MCF 10A (cell line): ENCODE measurements at regions of chr14 and their contacts with region 1.

Region 1: DNA sequence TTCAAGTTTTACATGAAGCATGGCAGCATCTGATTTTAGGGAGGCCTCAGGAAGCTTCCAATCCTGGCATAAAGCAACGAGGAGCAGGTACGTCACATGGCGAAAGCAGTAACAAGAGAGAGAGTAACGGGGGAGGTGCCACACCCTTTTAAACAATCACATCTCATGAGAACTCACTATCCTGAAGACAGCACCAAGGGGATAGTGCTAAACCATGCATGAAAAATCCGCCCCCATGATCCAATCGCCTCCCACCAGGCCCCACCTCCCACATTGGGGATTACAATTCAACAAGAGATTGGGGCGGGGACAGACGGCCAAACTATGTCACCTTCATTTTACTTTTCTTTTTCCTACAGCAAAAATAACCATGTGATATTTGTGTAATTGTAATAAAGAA is 7.2 kb upstream of the MAP3K9 start:
- DNase-seq: no peak
- H3K4me3 Mint-ChIP-seq: no peak overlapping the region
- H3K27ac Mint-ChIP-seq: no peak overlapping the region
- H3K4me1 Mint-ChIP-seq: no peaks in the 10 kb centered on the region
- H3K27me3 Mint-ChIP-seq: no peaks in the 10 kb centered on the region
- CTCF ChIP-seq: no peak

Region 2: DNA sequence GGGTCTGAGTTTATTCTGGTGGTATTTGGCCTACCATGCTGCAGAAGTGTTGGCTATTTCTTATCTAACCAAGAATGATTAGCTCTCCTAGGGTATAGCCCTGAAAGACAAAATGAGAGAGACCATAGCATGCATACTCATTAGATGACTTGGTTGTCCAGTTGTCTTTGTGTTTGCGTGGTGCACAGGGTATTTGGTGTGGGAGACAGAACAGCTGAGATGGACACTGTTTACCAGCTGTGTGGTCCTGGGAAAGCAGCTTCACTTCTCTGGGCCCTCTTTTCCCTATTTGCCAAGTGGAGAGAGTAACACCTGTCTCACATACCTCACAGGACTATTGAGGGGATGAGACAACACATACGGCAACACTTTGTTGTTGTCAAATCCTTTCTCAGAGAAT is 723.4 kb before region 1 on chr14:
- CTCF ChIA-PET with region 1: no interaction called
- POLR2A ChIA-PET with region 1: no interaction called
- intact Hi-C with region 1: loop called (anchors 2 kb)
- DNase-seq: no peak
- H3K4me3 Mint-ChIP-seq: no peak overlapping the region
- H3K27ac Mint-ChIP-seq: no peak overlapping the region
- H3K4me1 Mint-ChIP-seq: peaks cover 3% of the 10 kb centered on the region
- H3K27me3 Mint-ChIP-seq: peaks cover 20% of the 10 kb centered on the region
- CTCF ChIP-seq: no peak

Region 3: DNA sequence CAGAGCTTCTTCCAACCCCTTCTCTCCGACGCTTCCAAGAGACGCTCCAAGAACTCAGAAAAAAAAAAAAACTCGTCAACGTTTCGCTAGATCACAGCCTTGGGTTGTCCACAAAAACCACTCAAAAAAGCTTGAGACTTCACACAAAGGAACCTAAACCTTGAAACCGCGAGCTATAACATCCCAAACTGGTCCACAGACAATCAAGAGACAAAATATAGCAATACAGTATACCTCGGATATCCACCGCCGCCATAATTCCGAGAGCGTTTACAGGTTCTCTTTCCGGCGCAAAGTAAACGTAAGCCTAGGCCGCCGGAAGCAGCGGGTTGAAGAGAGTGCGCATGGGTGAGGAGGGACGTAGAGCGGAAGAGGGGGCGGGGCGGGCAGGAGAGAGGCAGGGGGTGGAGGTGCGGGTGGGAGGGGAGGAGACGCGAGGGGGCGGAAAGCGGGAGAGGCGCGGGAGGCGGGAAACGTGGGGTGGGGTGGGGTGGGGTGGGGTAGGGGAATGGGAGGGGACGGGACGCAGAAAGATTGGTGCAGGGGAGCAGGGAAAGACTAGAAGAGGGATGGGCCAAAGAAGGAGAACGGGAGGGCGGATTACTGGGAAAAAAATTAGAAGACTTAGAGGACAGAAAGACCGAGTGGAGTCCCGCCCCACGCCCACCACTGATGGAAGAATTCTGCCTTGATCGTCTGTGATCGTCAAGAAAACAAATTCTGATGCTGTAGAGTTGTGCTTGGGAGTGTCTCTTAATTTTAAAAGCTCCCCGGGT is 216.0 kb before region 1 on chr14 and contains the start of gene MED6:
- CTCF ChIA-PET with region 1: interaction called, 23 read pairs
- POLR2A ChIA-PET with region 1: no interaction called
- intact Hi-C with region 1: no loop called
- DNase-seq: peak; percentile 95
- H3K4me3 Mint-ChIP-seq: peak within 1 kb of the TSS; percentile 98
- H3K27ac Mint-ChIP-seq: peak within 1 kb of the TSS; percentile 98
- H3K4me1 Mint-ChIP-seq: peaks cover 13% of the 10 kb centered on the region
- H3K27me3 Mint-ChIP-seq: peaks cover 11% of the 10 kb centered on the region
- CTCF ChIP-seq: no peak
- total RNA-seq, gene MED6: 41.6 and 60.8 TPM in 2 replicates

Region 4: GRCh38 chr14:70714055-70714621 is 102.4 kb before region 1 on chr14:
- CTCF ChIA-PET with region 1: interaction called, 19 read pairs
- POLR2A ChIA-PET with region 1: no interaction called
- intact Hi-C with region 1: loop called (anchors 2 kb)
- DNase-seq: peak; percentile 72
- H3K4me3 Mint-ChIP-seq: no peak overlapping the region
- H3K27ac Mint-ChIP-seq: no peak overlapping the region
- H3K4me1 Mint-ChIP-seq: peaks cover 17% of the 10 kb centered on the region
- H3K27me3 Mint-ChIP-seq: no peaks in the 10 kb centered on the region
- CTCF ChIP-seq: peak; percentile 72

Region 5: DNA sequence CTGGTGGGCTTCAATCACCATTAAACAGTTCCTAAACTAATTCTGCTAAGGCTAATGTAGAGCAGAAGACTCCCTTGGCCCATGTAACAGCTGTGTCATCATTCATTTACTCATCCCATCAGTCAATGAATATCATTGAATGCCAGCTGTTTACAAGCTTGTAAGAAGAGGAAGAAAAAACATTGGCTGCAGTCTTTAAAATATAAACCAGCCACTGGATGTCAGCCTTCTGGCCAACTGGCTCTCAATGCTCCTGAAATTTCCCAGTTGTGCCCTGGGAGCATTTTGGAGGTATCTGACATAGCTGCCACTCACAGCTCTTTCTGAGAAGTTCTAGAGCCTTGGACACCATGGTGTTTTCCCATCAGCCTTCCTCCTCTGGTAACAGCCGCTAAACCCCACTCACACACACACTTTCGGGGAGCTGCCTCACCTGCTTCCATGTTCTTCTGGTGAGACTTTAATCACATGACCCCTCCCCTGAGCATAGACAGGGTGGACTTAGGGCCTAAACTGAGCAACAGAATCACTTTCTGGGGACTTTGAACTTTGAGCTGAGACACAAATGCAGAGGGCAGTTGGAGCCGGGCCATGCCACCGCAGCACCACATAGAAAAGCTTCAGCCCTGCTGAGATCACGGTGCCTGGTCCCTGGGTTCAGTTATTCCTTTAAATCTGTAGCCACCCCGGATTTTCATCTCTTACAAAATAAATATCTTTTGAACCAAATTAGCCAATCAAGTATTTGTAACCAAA is 11.0 kb after region 1 on chr14:
- CTCF ChIA-PET with region 1: interaction called, 31 read pairs
- POLR2A ChIA-PET with region 1: interaction called, 7 read pairs
- intact Hi-C with region 1: no loop called
- DNase-seq: no peak
- H3K4me3 Mint-ChIP-seq: no peak overlapping the region
- H3K27ac Mint-ChIP-seq: no peak overlapping the region
- H3K4me1 Mint-ChIP-seq: no peaks in the 10 kb centered on the region
- H3K27me3 Mint-ChIP-seq: no peaks in the 10 kb centered on the region
- CTCF ChIP-seq: no peak

Region 6: GRCh38 chr14:70972107-70972976 is 155.8 kb after region 1 on chr14:
- CTCF ChIA-PET with region 1: interaction called, 40 read pairs
- POLR2A ChIA-PET with region 1: interaction called, 4 read pairs
- intact Hi-C with region 1: loop called (anchors 1 kb)
- DNase-seq: peak; percentile 88
- H3K4me3 Mint-ChIP-seq: no peak overlapping the region
- H3K27ac Mint-ChIP-seq: peak overlapping the region; percentile 53
- H3K4me1 Mint-ChIP-seq: peaks cover 8% of the 10 kb centered on the region
- H3K27me3 Mint-ChIP-seq: no peaks in the 10 kb centered on the region
- CTCF ChIP-seq: peak; percentile 81

Region 7: GRCh38 chr14:71638523-71639196 is 822.1 kb after region 1 on chr14:
- CTCF ChIA-PET with region 1: no interaction called
- POLR2A ChIA-PET with region 1: no interaction called
- intact Hi-C with region 1: no loop called
- DNase-seq: peak; percentile 8
- H3K4me3 Mint-ChIP-seq: no peak overlapping the region
- H3K27ac Mint-ChIP-seq: peak overlapping the region; percentile 75
- H3K4me1 Mint-ChIP-seq: no peaks in the 10 kb centered on the region
- H3K27me3 Mint-ChIP-seq: no peaks in the 10 kb centered on the region
- CTCF ChIP-seq: no peak